CD8-positive, alpha-beta T cell (primary cell): ENCODE measurements at regions of chr19 and their contacts with region 1.

Region 1: DNA sequence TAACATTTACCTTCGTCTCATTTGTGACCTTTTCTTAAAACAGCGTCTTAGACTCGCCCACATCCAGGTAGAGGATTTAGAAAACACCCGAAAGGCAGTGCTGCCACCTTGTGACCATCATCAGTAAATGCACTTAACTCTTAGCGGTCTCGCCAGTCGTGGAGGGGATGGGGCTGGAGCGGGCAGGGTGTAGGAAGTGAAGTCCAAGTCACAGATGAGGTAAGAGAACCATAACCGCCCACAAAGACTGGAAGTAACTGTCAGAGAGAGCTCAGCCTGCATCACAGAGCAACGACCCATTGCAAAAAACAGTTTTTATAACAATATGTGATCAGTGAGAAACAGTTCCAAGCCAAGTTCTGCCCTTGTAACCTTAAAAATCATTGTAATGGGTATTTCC is 10.7 kb upstream of the CEACAM3 start:
- DNase-seq: peak; percentile 43 to 89 (median 71)
- ATAC-seq: peak; percentile 98
- H3K4me3 ChIP-seq: no peak overlapping the region
- H3K4me3 Mint-ChIP-seq: peak overlapping the region; percentile 24
- H3K27ac ChIP-seq: no peak overlapping the region
- H3K27ac Mint-ChIP-seq: no peak overlapping the region
- H3K4me1 ChIP-seq: peaks cover 13% of the 10 kb centered on the region
- H3K4me1 Mint-ChIP-seq: peaks cover 16% of the 10 kb centered on the region
- H3K27me3 ChIP-seq: peaks cover 0 to 8% of the 10 kb centered on the region in 2 experiments
- H3K27me3 Mint-ChIP-seq: peaks cover 51% of the 10 kb centered on the region
- CTCF ChIP-seq: peak; percentile 82

Region 2: DNA sequence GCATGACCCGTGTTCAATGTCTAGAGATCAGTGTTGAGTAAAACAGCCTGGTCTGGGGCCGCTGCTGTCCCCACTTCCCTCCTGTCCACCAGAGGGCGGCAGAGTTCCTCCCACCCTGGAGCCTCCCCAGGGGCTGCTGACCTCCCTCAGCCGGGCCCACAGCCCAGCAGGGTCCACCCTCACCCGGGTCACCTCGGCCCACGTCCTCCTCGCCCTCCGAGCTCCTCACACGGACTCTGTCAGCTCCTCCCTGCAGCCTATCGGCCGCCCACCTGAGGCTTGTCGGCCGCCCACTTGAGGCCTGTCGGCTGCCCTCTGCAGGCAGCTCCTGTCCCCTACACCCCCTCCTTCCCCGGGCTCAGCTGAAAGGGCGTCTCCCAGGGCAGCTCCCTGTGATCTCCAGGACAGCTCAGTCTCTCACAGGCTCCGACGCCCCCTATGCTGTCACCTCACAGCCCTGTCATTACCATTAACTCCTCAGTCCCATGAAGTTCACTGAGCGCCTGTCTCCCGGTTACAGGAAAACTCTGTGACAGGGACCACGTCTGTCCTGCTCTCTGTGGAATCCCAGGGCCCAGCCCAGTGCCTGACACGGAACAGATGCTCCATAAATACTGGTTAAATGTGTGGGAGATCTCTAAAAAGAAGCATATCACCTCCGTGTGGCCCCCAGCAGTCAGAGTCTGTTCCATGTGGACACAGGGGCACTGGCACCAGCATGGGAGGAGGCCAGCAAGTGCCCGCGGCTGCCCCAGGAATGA is 78.7 kb before region 1 on chr19:
- CTCF ChIA-PET with region 1: interaction called, 7 read pairs
- POLR2A ChIA-PET with region 1: no interaction called
- intact Hi-C with region 1: loop called in 1 of 2 experiments (anchors 2 kb)
- DNase-seq: peak; percentile 40 to 78 (median 68)
- ATAC-seq: peak; percentile 93
- H3K4me3 ChIP-seq: peak overlapping the region; percentile 31 to 46
- H3K4me3 Mint-ChIP-seq: peak overlapping the region; percentile 65
- H3K27ac ChIP-seq: no peak overlapping the region
- H3K27ac Mint-ChIP-seq: no peak overlapping the region
- H3K4me1 ChIP-seq: no peaks in the 10 kb centered on the region
- H3K4me1 Mint-ChIP-seq: peaks cover 5% of the 10 kb centered on the region
- H3K27me3 ChIP-seq: peaks cover 2 to 13% of the 10 kb centered on the region in 2 experiments
- H3K27me3 Mint-ChIP-seq: peaks cover 36% of the 10 kb centered on the region
- CTCF ChIP-seq: peak; percentile 99

Region 3: DNA sequence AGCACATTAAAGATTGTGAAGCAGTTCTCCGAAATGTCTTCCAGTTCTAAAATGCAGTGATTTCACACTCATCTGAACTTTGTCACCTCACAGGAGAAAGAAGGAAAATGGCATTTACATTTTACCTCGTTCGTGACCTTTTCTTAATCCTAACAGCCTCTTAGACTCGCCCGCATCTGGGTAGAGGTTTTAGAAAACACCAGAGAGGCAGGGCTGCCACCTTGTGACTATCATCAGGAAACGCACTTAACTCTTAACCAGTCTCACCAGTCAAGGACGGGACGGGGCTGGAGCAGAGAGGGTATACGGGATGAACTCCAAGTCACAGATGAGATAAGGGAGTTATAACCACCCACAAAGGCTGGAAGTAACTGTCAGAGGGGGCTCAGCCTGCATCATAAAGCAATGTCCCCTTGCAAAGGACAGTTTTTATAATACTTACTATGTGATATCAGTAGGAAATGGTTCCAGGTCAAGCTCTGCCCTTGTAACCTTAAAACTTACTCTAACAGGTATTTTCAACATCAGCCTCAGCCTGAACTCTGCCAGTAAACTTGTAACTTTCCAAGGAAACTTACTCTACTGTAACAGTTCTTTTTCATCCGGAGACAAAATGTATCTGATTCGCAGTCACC is 38.9 kb before region 1 on chr19:
- CTCF ChIA-PET with region 1: interaction called, 312 read pairs
- POLR2A ChIA-PET with region 1: interaction called, 3 read pairs
- intact Hi-C with region 1: no loop called
- DNase-seq: peak in 7 of 9 experiments; percentile 8 to 65 (median 39)
- ATAC-seq: peak; percentile 66
- H3K4me3 ChIP-seq: no peak overlapping the region
- H3K4me3 Mint-ChIP-seq: no peak overlapping the region
- H3K27ac ChIP-seq: no peak overlapping the region
- H3K27ac Mint-ChIP-seq: no peak overlapping the region
- H3K4me1 ChIP-seq: no peaks in the 10 kb centered on the region
- H3K4me1 Mint-ChIP-seq: peaks cover 9% of the 10 kb centered on the region
- H3K27me3 ChIP-seq: no peaks in the 10 kb centered on the region
- H3K27me3 Mint-ChIP-seq: peaks cover 54% of the 10 kb centered on the region
- CTCF ChIP-seq: peak; percentile 45

Region 4: GRCh38 chr19:41753936-41754529 is 31.6 kb before region 1 on chr19:
- CTCF ChIA-PET with region 1: interaction called, 312 read pairs
- POLR2A ChIA-PET with region 1: interaction called, 4 read pairs
- intact Hi-C with region 1: loop called (anchors 1 kb)
- DNase-seq: peak; percentile 46 to 78 (median 72)
- ATAC-seq: peak; percentile 94
- H3K4me3 ChIP-seq: no peak overlapping the region
- H3K4me3 Mint-ChIP-seq: no peak overlapping the region
- H3K27ac ChIP-seq: no peak overlapping the region
- H3K27ac Mint-ChIP-seq: no peak overlapping the region
- H3K4me1 ChIP-seq: no peaks in the 10 kb centered on the region
- H3K4me1 Mint-ChIP-seq: peaks cover 3% of the 10 kb centered on the region
- H3K27me3 ChIP-seq: peaks cover 0 to 3% of the 10 kb centered on the region in 2 experiments
- H3K27me3 Mint-ChIP-seq: peaks cover 31% of the 10 kb centered on the region
- CTCF ChIP-seq: peak; percentile 69

Region 5: DNA sequence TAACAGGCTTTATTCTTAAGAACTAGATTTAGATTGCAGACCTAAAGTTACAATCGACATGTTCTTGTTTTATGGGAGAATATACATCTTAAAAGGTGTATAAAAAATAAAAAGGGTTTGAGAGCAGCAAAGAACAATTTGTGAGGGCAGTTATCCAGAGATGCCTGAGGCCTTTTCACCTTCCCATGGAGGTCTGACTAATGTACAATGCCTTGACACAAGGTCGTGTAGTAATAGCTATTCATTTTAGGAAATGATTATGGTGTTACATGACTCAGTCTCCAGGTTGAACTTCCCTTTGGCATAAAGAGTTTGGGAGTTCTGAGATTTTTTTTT is 10.3 kb before region 1 on chr19:
- CTCF ChIA-PET with region 1: interaction called, 14 read pairs
- POLR2A ChIA-PET with region 1: no interaction called
- intact Hi-C with region 1: no loop called
- DNase-seq: no peak
- ATAC-seq: no peak
- H3K4me3 ChIP-seq: no peak overlapping the region
- H3K4me3 Mint-ChIP-seq: no peak overlapping the region
- H3K27ac ChIP-seq: no peak overlapping the region
- H3K27ac Mint-ChIP-seq: no peak overlapping the region
- H3K4me1 ChIP-seq: peaks cover 32% of the 10 kb centered on the region
- H3K4me1 Mint-ChIP-seq: peaks cover 37% of the 10 kb centered on the region
- H3K27me3 ChIP-seq: peaks cover 6 to 10% of the 10 kb centered on the region in 2 experiments
- H3K27me3 Mint-ChIP-seq: peaks cover 70% of the 10 kb centered on the region
- CTCF ChIP-seq: no peak

Region 6: DNA sequence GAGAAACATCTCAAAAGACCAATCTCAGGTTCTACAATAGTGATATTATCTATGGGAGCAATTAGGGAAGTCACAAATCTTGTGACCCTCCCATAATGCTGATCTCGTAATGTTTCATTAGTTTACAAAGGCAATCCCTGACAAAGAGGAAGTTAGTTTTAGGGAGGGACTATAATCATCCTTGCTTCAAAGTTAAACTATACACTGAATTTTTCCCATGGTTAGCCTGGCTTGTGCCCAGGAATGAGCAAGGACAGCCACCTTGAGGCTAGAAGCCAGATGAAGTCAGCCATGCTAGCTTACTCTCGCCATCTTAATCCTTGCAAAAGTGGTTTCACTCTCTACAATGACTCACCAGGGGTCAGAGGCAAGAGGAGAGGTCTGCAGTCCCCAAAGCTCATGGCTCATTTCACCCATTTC is 16.1 kb after region 1 on chr19:
- CTCF ChIA-PET with region 1: interaction called, 15 read pairs
- POLR2A ChIA-PET with region 1: no interaction called
- intact Hi-C with region 1: no loop called
- DNase-seq: no peak
- ATAC-seq: no peak
- H3K4me3 ChIP-seq: no peak overlapping the region
- H3K4me3 Mint-ChIP-seq: no peak overlapping the region
- H3K27ac ChIP-seq: no peak overlapping the region
- H3K27ac Mint-ChIP-seq: no peak overlapping the region
- H3K4me1 ChIP-seq: no peaks in the 10 kb centered on the region
- H3K4me1 Mint-ChIP-seq: peaks cover 12% of the 10 kb centered on the region
- H3K27me3 ChIP-seq: no peaks in the 10 kb centered on the region
- H3K27me3 Mint-ChIP-seq: peaks cover 2% of the 10 kb centered on the region
- CTCF ChIP-seq: no peak